ENCODE measurements at regions of chr12 and their contacts with region 1.

Region 1: GRCh38 chr12:52156736-52157565 is 34.9 kb downstream of the KRT80 start:
- DNase-seq: no peak
- H3K4me3 ChIP-seq: no peak overlapping the region
- H3K27me3 ChIP-seq: no peaks in the 10 kb centered on the region
- CTCF ChIP-seq: peak; percentile 96

Region 2: DNA sequence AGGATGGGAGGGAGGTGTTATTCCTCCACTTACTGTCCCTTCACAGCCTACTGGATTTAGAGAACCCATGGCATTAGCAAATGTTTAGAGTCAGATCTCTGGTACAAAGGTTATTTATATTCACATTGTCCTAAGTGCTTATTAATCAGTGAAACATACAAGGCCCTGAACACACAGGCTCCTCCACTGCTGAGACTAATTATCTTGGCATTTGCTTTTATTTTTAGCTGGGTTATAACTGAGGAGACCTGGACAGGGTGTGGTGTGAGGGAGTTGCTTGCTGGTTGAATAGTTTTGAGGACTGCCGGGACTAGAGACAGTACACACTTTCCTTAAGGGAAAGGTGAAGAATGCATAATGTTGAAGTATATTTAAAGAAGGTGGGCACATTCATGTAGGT is 385.9 kb before region 1 on chr12:
- CTCF ChIA-PET with region 1: no interaction called
- POLR2A ChIA-PET with region 1: no interaction called
- DNase-seq: peak; percentile 24
- H3K4me3 ChIP-seq: no peak overlapping the region
- H3K27me3 ChIP-seq: no peaks in the 10 kb centered on the region
- CTCF ChIP-seq: no peak

Region 3: DNA sequence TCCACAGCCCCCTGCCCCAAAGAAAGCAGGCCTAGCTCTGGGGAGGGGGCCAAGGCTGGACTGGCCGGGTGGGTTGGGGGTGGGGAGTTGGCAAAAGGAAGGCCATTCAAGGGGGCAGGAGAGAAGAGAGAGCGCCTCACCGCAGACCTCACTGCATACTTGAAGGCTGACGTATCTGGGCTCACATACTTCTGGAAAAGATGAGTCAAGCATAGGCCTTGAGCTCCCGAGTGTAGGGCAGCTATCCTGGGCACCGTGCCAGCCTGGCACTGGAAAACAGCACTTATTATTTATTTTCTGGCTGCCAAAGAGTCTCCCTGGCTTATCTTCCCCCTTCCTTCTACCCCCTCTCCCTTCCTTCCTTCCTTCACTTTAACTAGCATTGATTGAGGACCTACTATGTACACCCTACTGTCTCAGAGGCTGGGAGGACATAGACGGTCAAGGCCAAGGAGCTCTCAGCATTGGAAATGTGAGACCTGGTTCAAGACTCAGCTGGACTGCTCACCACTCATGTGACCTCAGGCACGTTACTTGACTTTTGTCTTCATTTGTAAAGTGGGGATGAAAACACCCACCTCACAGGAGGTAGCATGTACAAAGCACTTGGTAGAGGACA is 35.3 kb after region 1 on chr12:
- CTCF ChIA-PET with region 1: interaction called, 12 read pairs
- POLR2A ChIA-PET with region 1: no interaction called
- DNase-seq: peak; percentile 92
- H3K4me3 ChIP-seq: no peak overlapping the region
- H3K27me3 ChIP-seq: no peaks in the 10 kb centered on the region
- CTCF ChIP-seq: no peak